HEK293 (cell line): ENCODE measurements at regions of chr10 and their contacts with region 1.

Region 1: DNA sequence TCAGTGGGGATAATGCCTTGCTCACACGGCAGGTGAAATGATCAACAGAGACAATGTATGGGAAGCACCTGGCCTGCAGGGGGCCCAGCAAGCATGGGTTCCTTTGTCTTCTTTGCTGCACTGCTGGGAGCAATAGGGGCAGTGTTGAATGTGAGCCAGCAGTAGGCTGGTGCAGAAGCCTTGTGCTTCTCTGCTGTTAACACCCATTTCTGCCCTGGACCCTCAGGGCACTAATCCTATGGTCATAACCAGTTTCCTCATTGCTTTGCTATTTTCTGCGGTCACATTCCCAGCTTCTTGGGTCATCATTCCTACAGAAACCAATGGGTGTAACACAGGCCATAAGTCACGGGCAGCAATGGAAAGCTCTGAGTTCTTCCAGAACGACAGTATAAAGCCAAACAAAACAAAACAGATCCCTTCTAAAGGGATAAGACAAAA is 10.9 kb upstream of the LGI1 start:
- H3K4me3 ChIP-seq: no peak overlapping the region
- H3K27ac ChIP-seq: no peak overlapping the region
- H3K4me1 ChIP-seq: peaks cover 3% of the 10 kb centered on the region; the same call in 1 of the 2 replicates
- CTCF ChIP-seq: no peak

Region 2: GRCh38 chr10:93702211-93703001 is 44.5 kb before region 1 on chr10 and contains the start of gene FRA10AC1:
- CTCF ChIA-PET with region 1: interaction called, 21 read pairs
- POLR2A ChIA-PET with region 1: interaction called, 4 read pairs
- H3K4me3 ChIP-seq: peak within 1 kb of the TSS; percentile 79
- H3K27ac ChIP-seq: peak within 1 kb of the TSS; percentile 84
- H3K4me1 ChIP-seq: no peaks in the 10 kb centered on the region; the same call in 1 of the 2 replicates
- CTCF ChIP-seq: peak; percentile 97

Region 3: DNA sequence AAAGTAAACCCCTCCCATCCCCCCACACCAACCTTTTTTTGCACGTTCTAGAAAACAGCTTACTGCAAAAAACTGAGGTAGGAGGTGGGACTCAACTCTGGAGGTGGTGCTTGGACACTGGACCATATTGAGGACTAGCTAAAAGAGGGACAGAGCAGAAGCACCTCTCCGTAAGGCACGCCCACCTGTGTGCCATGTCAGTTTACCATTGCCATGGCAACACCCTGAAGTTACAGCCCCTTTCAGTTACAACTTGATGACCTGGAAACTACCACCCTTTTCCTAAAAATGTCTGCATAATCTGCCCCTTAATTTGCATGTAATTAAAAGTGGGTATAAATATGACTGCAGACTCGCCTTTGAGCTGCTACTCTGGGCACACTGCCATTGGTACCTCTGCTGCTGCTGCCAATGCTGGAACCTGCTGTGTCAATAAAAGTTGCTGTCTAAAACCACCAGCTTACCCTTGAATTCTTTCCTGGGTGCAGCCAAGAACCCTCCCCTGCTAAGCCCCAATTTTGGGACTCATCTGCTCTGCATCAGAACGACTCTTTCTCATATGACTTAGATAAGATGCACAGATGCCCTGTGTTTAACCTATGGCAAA is 34.4 kb before region 1 on chr10:
- CTCF ChIA-PET with region 1: no interaction called
- POLR2A ChIA-PET with region 1: no interaction called
- H3K4me3 ChIP-seq: no peak overlapping the region
- H3K27ac ChIP-seq: no peak overlapping the region
- H3K4me1 ChIP-seq: no peaks in the 10 kb centered on the region
- CTCF ChIP-seq: no peak

Region 4: DNA sequence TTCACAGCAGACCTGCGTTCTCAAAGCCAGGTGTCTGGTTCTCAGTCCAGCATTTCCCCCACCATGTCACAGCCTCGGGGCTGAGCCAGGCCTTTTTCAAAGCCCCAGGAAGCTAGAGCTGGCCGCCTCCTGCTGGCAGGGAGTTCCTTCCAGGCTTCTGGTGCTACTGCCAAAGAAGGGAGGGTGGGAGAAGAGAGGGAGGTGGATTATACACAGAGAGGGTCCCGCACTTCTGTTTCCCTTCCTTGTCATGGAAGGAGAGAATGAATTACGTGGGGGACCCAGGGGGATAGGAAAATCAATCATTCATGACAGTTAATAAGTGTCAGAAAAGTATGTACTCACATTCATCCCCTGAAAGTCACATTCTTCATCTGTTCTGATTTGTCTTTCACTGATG is 10.3 kb after region 1 on chr10:
- CTCF ChIA-PET with region 1: interaction called, 16 read pairs
- POLR2A ChIA-PET with region 1: no interaction called
- H3K4me3 ChIP-seq: no peak overlapping the region
- H3K27ac ChIP-seq: no peak overlapping the region
- H3K4me1 ChIP-seq: peaks cover 3% of the 10 kb centered on the region; the same call in 1 of the 2 replicates
- CTCF ChIP-seq: no peak

Region 5: GRCh38 chr10:93775356-93775755 is 28.5 kb after region 1 on chr10:
- CTCF ChIA-PET with region 1: interaction called, 12 read pairs
- POLR2A ChIA-PET with region 1: no interaction called
- H3K4me3 ChIP-seq: no peak overlapping the region
- H3K27ac ChIP-seq: no peak overlapping the region
- H3K4me1 ChIP-seq: no peaks in the 10 kb centered on the region
- CTCF ChIP-seq: no peak

Region 6: DNA sequence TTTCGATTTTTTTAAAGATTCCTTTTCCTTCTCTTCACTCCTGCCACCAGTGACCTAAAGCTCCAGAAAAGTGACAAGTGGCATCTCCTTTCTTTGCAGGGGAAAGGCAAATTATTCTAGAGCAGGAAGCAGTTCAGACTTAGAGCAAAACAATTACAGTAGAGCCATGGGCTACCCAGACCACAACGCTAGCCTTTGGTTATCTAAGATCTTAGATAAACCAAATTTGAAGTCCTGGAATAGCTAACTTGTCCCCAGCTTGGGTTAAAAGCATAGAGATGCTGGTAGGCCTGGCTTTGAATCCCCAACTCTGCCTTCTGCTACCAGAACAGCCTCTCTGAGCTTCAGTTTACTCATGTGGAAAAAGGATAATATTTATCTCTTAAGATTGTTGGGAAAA is 49.3 kb after region 1 on chr10:
- CTCF ChIA-PET with region 1: interaction called, 10 read pairs
- POLR2A ChIA-PET with region 1: no interaction called
- H3K4me3 ChIP-seq: no peak overlapping the region
- H3K27ac ChIP-seq: no peak overlapping the region
- H3K4me1 ChIP-seq: no peaks in the 10 kb centered on the region
- CTCF ChIP-seq: no peak

Region 7: GRCh38 chr10:93806903-93807302 is 60.0 kb after region 1 on chr10:
- CTCF ChIA-PET with region 1: interaction called, 48 read pairs
- POLR2A ChIA-PET with region 1: interaction called, 5 read pairs
- H3K4me3 ChIP-seq: no peak overlapping the region
- H3K27ac ChIP-seq: no peak overlapping the region
- H3K4me1 ChIP-seq: no peaks in the 10 kb centered on the region
- CTCF ChIP-seq: no peak

Region 8: DNA sequence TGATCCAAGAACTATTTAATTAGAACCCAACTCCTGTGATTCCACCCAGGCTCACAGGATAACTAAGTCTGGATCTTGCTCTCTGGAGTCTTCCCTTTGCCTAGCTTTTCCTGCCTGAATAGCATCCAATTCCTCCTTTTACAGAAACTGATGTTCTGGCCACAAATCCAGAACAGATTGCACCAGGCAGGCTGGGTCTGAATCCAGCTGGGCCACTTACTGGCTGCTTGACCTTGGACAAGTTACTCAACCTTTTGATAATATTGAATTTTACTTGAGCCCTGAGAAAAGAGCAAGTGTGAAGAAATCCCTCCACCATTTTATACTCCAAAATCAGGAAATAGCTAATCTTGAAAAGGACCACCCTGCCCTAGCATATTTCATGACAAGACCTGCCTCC is 91.4 kb after region 1 on chr10:
- CTCF ChIA-PET with region 1: no interaction called
- POLR2A ChIA-PET with region 1: no interaction called
- H3K4me3 ChIP-seq: no peak overlapping the region
- H3K27ac ChIP-seq: no peak overlapping the region
- H3K4me1 ChIP-seq: no peaks in the 10 kb centered on the region
- CTCF ChIP-seq: no peak

Region 9: GRCh38 chr10:93859049-93859655 is 112.3 kb after region 1 on chr10:
- CTCF ChIA-PET with region 1: interaction called, 34 read pairs
- POLR2A ChIA-PET with region 1: no interaction called
- H3K4me3 ChIP-seq: no peak overlapping the region
- H3K27ac ChIP-seq: no peak overlapping the region
- H3K4me1 ChIP-seq: no peaks in the 10 kb centered on the region
- CTCF ChIP-seq: no peak

Region 10: DNA sequence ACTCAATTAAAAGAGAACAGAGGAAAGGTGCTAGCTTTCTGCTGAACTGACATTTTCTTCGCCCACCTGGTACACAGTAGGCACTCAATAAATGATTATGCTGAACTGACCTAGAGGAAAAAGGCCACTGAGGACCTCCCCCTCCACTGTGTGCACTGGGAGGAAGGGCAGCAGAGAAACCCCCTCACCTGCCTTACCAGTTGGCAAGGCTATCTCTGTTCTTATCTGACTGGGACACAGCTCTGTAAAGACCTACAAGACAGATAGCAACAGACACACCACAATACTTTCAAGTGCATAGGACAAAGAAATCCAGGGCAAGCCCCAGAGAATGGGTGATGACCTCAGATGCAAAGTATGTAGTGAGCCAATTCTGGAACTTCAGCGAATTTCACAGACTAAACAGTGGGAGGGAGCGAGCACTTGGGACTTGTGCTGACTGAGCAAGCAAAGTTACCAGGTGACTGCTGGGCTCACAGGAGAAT is 1513.6 kb after region 1 on chr10:
- CTCF ChIA-PET with region 1: no interaction called
- POLR2A ChIA-PET with region 1: no interaction called
- H3K4me3 ChIP-seq: no peak overlapping the region
- H3K27ac ChIP-seq: no peak overlapping the region
- H3K4me1 ChIP-seq: peaks cover 7% of the 10 kb centered on the region
- CTCF ChIP-seq: no peak